CD14-positive monocyte (primary cell): ENCODE measurements at regions of chr1 and their contacts with region 1.

Region 1: GRCh38 chr1:94949681-94950661 is 23.1 kb upstream of the CNN3 start:
- DNase-seq: no peak
- H3K4me3 ChIP-seq: no peak overlapping the region
- H3K4me3 Mint-ChIP-seq: no peak overlapping the region
- H3K27ac ChIP-seq: no peak overlapping the region
- H3K27ac Mint-ChIP-seq: no peak overlapping the region
- H3K4me1 ChIP-seq: no peaks in the 10 kb centered on the region
- H3K4me1 Mint-ChIP-seq: no peaks in the 10 kb centered on the region
- H3K27me3 ChIP-seq: peaks cover 0 to under 1% of the 10 kb centered on the region in 2 donors
- H3K27me3 Mint-ChIP-seq: peaks cover 0 to 2% (median 0%) of the 10 kb centered on the region in 3 donors
- CTCF ChIP-seq: no peak

Region 2: DNA sequence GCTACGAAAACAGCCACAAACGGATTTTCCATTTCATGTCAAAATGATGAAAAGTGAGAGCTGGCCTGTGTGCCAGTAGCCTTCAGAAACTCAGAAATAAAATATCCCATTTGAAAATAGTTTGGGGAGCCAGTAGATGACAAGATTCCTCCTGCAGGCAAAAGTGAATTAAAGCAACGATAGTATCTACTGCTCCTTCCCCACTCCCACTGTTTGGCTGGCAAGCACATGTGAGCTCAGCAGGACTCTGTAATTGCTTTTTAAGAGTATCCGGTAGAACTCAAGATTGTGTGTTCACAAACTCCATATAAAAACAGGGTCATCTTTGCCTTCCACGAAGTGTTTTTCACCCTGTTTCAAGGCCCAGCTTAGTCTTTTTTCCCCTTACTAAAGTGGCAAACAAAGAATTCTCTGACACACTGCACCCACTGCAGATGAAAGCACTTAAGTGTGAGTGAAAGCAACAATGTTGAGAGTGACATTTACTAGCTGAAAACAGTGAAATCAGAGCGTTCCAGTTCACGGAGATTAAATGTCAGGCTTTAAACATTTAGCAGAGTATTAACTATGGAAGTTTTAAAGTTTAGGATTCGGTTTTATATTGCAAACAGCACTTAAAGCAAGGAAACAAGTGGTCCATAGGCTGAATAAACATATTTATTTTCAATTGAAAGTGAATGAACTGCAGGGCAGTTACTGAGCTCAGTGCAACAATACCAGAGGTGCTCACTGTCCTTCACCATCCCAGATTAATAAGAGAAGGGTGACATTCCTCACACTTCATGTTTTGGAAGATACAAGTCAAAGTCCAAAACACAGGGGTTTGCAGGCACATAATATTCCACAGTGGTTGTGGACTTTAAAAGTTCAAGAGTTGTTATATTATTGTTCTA is 52.8 kb after region 1 on chr1:
- intact Hi-C with region 1: loop called in 1 of 2 experiments (anchors 10 kb)
- DNase-seq: no peak
- H3K4me3 ChIP-seq: no peak overlapping the region
- H3K4me3 Mint-ChIP-seq: no peak overlapping the region
- H3K27ac ChIP-seq: no peak overlapping the region
- H3K27ac Mint-ChIP-seq: no peak overlapping the region
- H3K4me1 ChIP-seq: no peaks in the 10 kb centered on the region
- H3K4me1 Mint-ChIP-seq: no peaks in the 10 kb centered on the region
- H3K27me3 ChIP-seq: no peaks in the 10 kb centered on the region
- H3K27me3 Mint-ChIP-seq: no peaks in the 10 kb centered on the region
- CTCF ChIP-seq: no peak